ENCODE measurements at regions of chr6 and their contacts with region 1.

Region 1: DNA sequence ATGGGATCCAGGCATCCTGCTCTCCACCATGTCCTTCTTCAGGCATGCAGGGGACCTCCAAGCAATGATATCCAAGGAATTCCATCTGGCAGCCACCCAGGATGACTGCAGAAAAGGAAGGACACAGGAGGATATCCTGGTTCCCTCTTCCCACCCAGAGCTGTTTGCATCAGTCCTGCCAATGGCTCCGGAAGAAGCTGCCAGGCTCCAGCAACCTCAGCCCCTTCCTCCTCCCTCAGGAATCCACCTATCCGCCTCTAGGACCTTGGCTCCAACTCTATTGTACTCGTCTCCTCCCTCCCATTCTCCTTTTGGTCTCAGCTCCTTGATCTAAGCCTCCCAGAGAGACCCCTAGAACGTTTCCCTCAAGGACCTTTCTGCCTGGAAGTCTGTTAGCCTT is 733 bp upstream of the PSORS1C2 start:
- DNase-seq: no peak
- ATAC-seq: no peak

Region 2: DNA sequence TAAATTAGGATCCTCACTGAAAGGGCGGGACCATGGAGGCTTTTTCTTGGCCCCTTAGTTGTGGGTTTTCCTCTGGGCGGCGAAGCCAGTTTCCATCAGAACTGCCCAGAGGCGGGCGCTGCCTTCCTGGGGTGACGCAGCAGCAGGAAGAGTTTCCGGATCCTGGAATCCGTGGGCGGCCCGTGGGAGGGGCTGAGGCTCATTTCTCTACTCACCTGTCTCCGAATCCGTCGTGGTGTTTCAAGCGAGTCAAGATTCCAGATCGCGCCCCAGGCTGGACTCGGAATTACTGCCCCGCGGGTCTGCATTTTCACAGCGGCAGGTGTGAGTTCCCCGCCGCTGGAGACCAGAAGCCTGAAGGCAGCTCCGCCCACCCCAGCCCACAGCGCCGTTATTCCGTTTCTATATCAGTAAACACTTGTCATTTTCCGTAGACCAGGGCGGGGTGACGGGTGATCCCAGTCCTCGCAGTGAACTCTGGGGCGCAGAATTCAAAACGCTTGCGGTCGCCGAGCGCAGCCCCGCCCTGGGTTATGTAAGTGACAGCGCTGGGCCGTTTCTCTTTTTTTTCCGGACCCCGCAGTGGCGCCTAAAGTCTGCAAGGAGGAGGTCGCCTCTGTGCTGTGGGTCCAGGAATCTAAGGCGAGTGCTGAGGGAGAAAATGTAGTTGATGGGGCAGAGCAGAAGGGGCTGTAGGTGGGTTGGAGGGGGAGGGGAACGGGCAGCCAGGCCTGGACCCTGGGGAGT is 58.1 kb after region 1 on chr6:
- intact Hi-C with region 1: loop called (anchors 5 kb)
- DNase-seq: peak; percentile 93
- ATAC-seq: peak; percentile 89

Measured in left ventricle myocardium superior (tissue), 1 donor.